ENCODE measurements at regions of chr11 and their contacts with region 1.

Region 1: DNA sequence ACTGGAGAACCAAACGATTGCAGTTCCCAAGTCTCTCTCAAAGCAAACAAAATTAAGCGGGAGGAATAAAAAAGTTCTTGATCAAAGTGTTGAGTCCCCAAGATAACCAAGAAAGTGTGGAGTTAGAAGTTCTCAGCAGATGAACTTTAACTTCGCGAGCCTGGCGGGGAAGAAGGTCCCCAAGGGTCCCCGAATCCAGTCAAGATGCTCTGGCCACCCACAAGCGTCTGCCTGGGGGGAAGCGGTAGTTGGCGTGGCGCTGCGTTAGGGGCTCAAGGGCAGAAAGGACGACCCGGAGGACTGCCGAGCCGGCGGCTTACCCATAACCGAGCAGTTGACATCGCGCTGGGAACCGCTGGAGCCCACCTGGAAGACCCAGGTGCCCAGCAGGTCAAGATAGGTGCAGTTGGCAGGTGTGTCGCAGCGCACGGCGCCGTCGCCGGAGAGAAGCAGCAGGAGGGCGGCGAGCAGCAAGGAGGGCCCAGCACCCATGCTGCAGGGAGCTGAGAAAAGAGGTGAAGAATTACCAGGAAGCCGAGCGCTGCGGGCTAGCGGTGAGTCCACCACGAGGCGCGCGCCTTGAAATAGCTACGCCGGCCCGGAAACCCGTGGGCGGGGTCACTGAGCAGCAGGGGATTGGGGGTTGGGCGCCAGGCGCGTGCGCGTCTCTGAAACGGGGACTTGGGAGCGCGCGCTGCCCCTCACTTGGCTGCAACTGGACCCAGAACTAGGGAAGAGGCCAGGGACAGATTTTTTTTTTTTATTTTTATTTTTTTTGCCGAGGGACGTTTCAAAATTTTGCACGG is at the start of gene CTSC:
- DNase-seq: peak; percentile 79 to 93 (median 86)
- ATAC-seq: peak; percentile 94
- H3K4me3 ChIP-seq: peak within 1 kb of the TSS; percentile 97
- H3K4me3 Mint-ChIP-seq: peak within 1 kb of the TSS; percentile 88 to 100 (median 99)
- H3K27ac ChIP-seq: peak within 1 kb of the TSS; percentile 70
- H3K27ac Mint-ChIP-seq: peak within 1 kb of the TSS; percentile 88 to 99 (median 96)
- H3K4me1 ChIP-seq: peaks cover 0 to 36% of the 10 kb centered on the region in 2 donors
- H3K4me1 Mint-ChIP-seq: peaks cover 30 to 76% (median 63%) of the 10 kb centered on the region in 7 donors
- H3K27me3 ChIP-seq: no peaks in the 10 kb centered on the region
- H3K27me3 Mint-ChIP-seq: no peaks in the 10 kb centered on the region
- total RNA-seq, gene CTSC: 26.9 to 174 (median 45.2) TPM

Region 2: DNA sequence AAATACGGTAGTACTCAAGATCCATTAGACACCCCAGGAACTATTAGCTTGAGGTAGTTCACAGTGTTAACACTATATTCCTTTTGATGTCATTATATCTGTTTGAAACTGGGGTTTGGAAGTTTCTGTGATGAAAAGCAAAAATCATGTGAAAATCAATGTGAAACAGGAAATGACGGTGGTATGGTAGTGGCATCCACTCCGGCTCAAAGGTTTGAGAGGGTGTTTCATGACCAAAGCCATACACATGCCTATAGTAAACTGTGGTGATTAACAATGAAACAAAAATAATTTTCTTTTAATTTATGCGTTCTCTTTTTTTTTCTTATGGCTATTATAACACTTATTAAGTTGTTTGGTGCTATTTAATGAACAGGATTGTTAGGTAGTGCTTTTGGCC is 173.1 kb before region 1 on chr11:
- CTCF ChIA-PET with region 1: no interaction called
- POLR2A ChIA-PET with region 1: no interaction called
- intact Hi-C with region 1: no loop called
- DNase-seq: no peak
- ATAC-seq: no peak
- H3K4me3 ChIP-seq: no peak overlapping the region
- H3K4me3 Mint-ChIP-seq: no peak overlapping the region
- H3K27ac ChIP-seq: no peak overlapping the region
- H3K27ac Mint-ChIP-seq: no peak overlapping the region
- H3K4me1 ChIP-seq: no peaks in the 10 kb centered on the region
- H3K4me1 Mint-ChIP-seq: no peaks in the 10 kb centered on the region
- H3K27me3 ChIP-seq: no peaks in the 10 kb centered on the region
- H3K27me3 Mint-ChIP-seq: peaks cover 0 to 13% (median 9%) of the 10 kb centered on the region in 5 donors

Region 3: GRCh38 chr11:88174709-88175568 is 162.4 kb before region 1 on chr11 and contains the start of gene RAB38:
- CTCF ChIA-PET with region 1: no interaction called
- POLR2A ChIA-PET with region 1: no interaction called
- intact Hi-C with region 1: loop called in 1 of 2 experiments (anchors 2 kb)
- DNase-seq: peak in 3 of 9 donors; percentile 1 to 63 (median 2)
- ATAC-seq: peak; percentile 75
- H3K4me3 ChIP-seq: peak within 1 kb of the TSS; percentile 45
- H3K4me3 Mint-ChIP-seq: peak within 1 kb of the TSS; percentile 50 to 85 (median 71)
- H3K27ac ChIP-seq: no peak within 1 kb of the TSS
- H3K27ac Mint-ChIP-seq: peak within 1 kb of the TSS in 2 of 9 donors; percentile 25 to 77
- H3K4me1 ChIP-seq: peaks cover 0 to 4% of the 10 kb centered on the region in 2 donors
- H3K4me1 Mint-ChIP-seq: peaks cover 0 to 47% (median 8%) of the 10 kb centered on the region in 7 donors
- H3K27me3 ChIP-seq: no peaks in the 10 kb centered on the region
- H3K27me3 Mint-ChIP-seq: peaks cover 0 to 9% (median 7%) of the 10 kb centered on the region in 5 donors
- total RNA-seq, gene RAB38: 0.21 to 1.9 (median 0.92) TPM in 4 of 5 experiments, not detected in the other

Region 4: GRCh38 chr11:88295028-88295427 is 42.4 kb before region 1 on chr11:
- CTCF ChIA-PET with region 1: no interaction called
- POLR2A ChIA-PET with region 1: no interaction called
- intact Hi-C with region 1: no loop called
- DNase-seq: no peak
- ATAC-seq: no peak
- H3K4me3 ChIP-seq: no peak overlapping the region
- H3K4me3 Mint-ChIP-seq: no peak overlapping the region
- H3K27ac ChIP-seq: no peak overlapping the region
- H3K27ac Mint-ChIP-seq: no peak overlapping the region
- H3K4me1 ChIP-seq: no peaks in the 10 kb centered on the region
- H3K4me1 Mint-ChIP-seq: peaks cover 0 to 19% (median 9%) of the 10 kb centered on the region in 7 donors
- H3K27me3 ChIP-seq: no peaks in the 10 kb centered on the region
- H3K27me3 Mint-ChIP-seq: no peaks in the 10 kb centered on the region

Region 5: DNA sequence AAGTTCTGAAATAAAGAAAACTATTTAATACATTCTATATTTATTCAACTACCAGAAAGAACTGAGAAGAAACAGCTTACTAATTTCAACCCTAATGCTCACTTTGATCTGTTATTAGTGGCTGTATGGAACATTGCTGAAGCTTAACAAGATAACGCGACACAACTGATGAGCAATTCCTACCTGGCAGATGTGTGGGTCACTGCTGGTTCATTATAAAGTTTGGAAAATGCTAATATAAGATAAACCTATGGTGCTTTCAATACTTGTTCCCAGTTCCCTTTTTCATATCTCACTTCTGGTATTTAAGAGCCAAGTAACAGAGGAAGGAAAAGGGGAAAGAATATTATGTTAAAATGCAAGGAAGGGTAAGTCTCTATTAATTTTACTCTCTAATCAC is 10.3 kb before region 1 on chr11:
- CTCF ChIA-PET with region 1: no interaction called
- POLR2A ChIA-PET with region 1: interaction called, 5 read pairs
- intact Hi-C with region 1: loop called in 1 of 2 experiments (anchors 1 kb)
- DNase-seq: no peak
- ATAC-seq: no peak
- H3K4me3 ChIP-seq: no peak overlapping the region
- H3K4me3 Mint-ChIP-seq: peak overlapping the region in 1 of 10 donors; percentile 12
- H3K27ac ChIP-seq: no peak overlapping the region
- H3K27ac Mint-ChIP-seq: peak overlapping the region in 2 of 9 donors; percentile 33 to 53
- H3K4me1 ChIP-seq: peaks cover 26 to 68% of the 10 kb centered on the region in 2 donors
- H3K4me1 Mint-ChIP-seq: peaks cover 64 to 98% (median 90%) of the 10 kb centered on the region in 7 donors
- H3K27me3 ChIP-seq: no peaks in the 10 kb centered on the region
- H3K27me3 Mint-ChIP-seq: no peaks in the 10 kb centered on the region

Region 6: DNA sequence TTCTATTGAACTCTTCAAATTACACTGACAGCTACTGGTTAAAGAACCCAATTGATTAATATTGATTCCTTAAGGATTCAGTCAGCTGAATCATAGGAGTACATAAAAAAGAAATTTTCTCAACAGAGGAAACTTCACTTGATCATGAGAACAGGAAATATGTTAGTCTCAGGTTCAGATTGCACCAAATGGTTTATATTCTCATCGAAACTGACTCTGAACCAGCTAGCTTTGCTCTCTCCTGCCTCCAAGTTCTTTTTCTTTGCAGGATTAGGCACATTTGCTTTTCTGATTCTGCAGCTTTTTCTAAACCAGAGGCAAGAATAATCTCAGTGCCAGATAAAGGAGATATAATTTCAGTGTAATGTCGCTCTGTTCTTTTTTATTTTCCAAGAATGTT is 33.4 kb after region 1 on chr11:
- CTCF ChIA-PET with region 1: no interaction called
- POLR2A ChIA-PET with region 1: interaction called, 4 read pairs
- intact Hi-C with region 1: loop called (anchors 1 to 5 kb)
- DNase-seq: no peak
- ATAC-seq: no peak
- H3K4me3 ChIP-seq: no peak overlapping the region
- H3K4me3 Mint-ChIP-seq: peak overlapping the region in 7 of 10 donors; percentile 34 to 77 (median 49)
- H3K27ac ChIP-seq: no peak overlapping the region
- H3K27ac Mint-ChIP-seq: peak overlapping the region in 4 of 9 donors; percentile 1 to 63 (median 18)
- H3K4me1 ChIP-seq: peaks cover 0 to 23% of the 10 kb centered on the region in 2 donors
- H3K4me1 Mint-ChIP-seq: peaks cover 11 to 45% (median 41%) of the 10 kb centered on the region in 7 donors
- H3K27me3 ChIP-seq: no peaks in the 10 kb centered on the region
- H3K27me3 Mint-ChIP-seq: no peaks in the 10 kb centered on the region

Region 7: GRCh38 chr11:88535916-88536547 is 198.6 kb after region 1 on chr11:
- CTCF ChIA-PET with region 1: no interaction called
- POLR2A ChIA-PET with region 1: no interaction called
- intact Hi-C with region 1: loop called in 1 of 2 experiments (anchors 2 kb)
- DNase-seq: no peak
- ATAC-seq: peak; percentile 46
- H3K4me3 ChIP-seq: no peak overlapping the region
- H3K4me3 Mint-ChIP-seq: no peak overlapping the region
- H3K27ac ChIP-seq: no peak overlapping the region
- H3K27ac Mint-ChIP-seq: no peak overlapping the region
- H3K4me1 ChIP-seq: no peaks in the 10 kb centered on the region
- H3K4me1 Mint-ChIP-seq: peaks cover 0 to 15% (median 0%) of the 10 kb centered on the region in 7 donors
- H3K27me3 ChIP-seq: no peaks in the 10 kb centered on the region
- H3K27me3 Mint-ChIP-seq: peaks cover 0 to 11% (median 1%) of the 10 kb centered on the region in 5 donors

Measured in naive thymus-derived CD4-positive, alpha-beta T cell (primary cell).